ENCODE measurements at regions of chr6 and their contacts with region 1.

Region 1: GRCh38 chr6:24581084-24581669 is 64.8 kb downstream of the KIAA0319 start:
- DNase-seq: peak; percentile 83
- H3K4me3 ChIP-seq: no peak overlapping the region
- H3K27ac ChIP-seq: no peak overlapping the region
- H3K4me1 ChIP-seq: peaks cover 0 to 10% (median 7%) of the 10 kb centered on the region in 6 donors
- H3K27me3 ChIP-seq: no peaks in the 10 kb centered on the region
- CTCF ChIP-seq: peak; percentile 18 to 88 (median 73)
- POLR2A ChIP-seq: no peak

Region 2: DNA sequence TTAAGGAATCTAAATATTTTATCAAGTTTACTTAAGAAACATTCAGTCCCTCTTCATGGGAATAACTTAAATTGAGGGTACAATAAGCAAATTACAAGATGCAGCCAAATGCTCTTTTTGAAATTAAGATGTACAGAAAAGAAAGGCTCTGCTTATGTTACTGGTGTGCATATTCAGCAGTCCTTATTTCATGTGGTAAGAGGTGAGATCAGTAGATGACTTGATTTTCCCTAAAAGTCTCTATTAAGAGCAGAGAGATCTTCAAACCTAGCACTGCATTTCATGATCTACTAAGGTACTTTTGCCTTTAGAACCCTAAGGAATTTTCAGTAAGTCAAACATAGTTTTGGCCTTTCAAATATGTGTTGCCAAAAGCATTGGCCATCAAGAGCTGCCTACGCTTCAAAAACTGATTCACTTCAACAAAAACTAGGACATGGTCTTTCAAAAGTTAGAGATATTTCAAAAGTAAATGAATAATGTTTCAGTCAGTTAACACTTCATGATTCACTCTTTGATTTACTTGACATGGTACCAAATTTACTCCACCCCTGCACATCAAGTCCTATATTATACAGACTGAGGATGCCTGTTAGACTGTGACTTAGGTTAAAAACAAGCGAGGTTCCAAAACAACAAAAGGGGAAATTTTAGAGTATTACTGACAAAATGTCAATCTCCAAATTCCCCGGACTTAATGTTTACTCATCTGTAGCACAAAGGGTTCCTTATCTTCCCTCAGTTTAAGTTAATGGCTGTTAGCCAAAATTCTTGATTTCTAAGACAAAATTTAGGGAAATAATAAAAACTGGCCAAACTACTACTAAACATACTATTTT is 118.6 kb after region 1 on chr6:
- intact Hi-C with region 1: loop called (anchors 5 kb)
- DNase-seq: no peak
- H3K4me3 ChIP-seq: no peak overlapping the region
- H3K27ac ChIP-seq: peak overlapping the region in 1 of 8 donors; percentile 26
- H3K4me1 ChIP-seq: peaks cover 0 to 55% (median 11%) of the 10 kb centered on the region in 6 donors
- H3K27me3 ChIP-seq: no peaks in the 10 kb centered on the region
- CTCF ChIP-seq: no peak
- POLR2A ChIP-seq: no peak

Region 3: GRCh38 chr6:24766680-24767462 is 185.7 kb after region 1 on chr6:
- intact Hi-C with region 1: loop called (anchors 5 kb)
- DNase-seq: no peak
- H3K4me3 ChIP-seq: no peak overlapping the region
- H3K27ac ChIP-seq: peak overlapping the region in 1 of 8 donors; percentile 13
- H3K4me1 ChIP-seq: peaks cover 0 to 8% (median 1%) of the 10 kb centered on the region in 6 donors
- H3K27me3 ChIP-seq: no peaks in the 10 kb centered on the region
- CTCF ChIP-seq: peak in 9 of 11 experiments; percentile 20 to 66 (median 54)
- POLR2A ChIP-seq: no peak